ENCODE measurements at regions of chr1 and their contacts with region 1.

Region 1: GRCh38 chr1:87292684-87293493 is 35.8 kb upstream of the LMO4 start:
- DNase-seq: peak in 1 of 2 donors; percentile 66
- ATAC-seq: peak in 4 of 8 donors; percentile 42 to 75 (median 62)
- H3K4me3 ChIP-seq: no peak overlapping the region
- H3K27ac ChIP-seq: no peak overlapping the region
- H3K4me1 ChIP-seq: no peaks in the 10 kb centered on the region
- H3K27me3 ChIP-seq: peaks cover 0 to 2% (median 0%) of the 10 kb centered on the region in 7 donors
- CTCF ChIP-seq: peak; percentile 56 to 88 (median 78)

Region 2: GRCh38 chr1:87131809-87132283 is 161.0 kb before region 1 on chr1:
- intact Hi-C with region 1: loop called in 5 of 10 experiments (anchors 5 to 10 kb)
- DNase-seq: peak; percentile 81 to 84
- ATAC-seq: peak; percentile 87 to 95 (median 91)
- H3K4me3 ChIP-seq: peak overlapping the region; percentile 21 to 63 (median 50)
- H3K27ac ChIP-seq: peak overlapping the region; percentile 5 to 85 (median 68)
- H3K4me1 ChIP-seq: peaks cover 0 to 52% (median 22%) of the 10 kb centered on the region in 9 donors
- H3K27me3 ChIP-seq: peaks cover 0 to 9% (median 0%) of the 10 kb centered on the region in 7 donors
- CTCF ChIP-seq: peak; percentile 85 to 97 (median 93)

Region 3: DNA sequence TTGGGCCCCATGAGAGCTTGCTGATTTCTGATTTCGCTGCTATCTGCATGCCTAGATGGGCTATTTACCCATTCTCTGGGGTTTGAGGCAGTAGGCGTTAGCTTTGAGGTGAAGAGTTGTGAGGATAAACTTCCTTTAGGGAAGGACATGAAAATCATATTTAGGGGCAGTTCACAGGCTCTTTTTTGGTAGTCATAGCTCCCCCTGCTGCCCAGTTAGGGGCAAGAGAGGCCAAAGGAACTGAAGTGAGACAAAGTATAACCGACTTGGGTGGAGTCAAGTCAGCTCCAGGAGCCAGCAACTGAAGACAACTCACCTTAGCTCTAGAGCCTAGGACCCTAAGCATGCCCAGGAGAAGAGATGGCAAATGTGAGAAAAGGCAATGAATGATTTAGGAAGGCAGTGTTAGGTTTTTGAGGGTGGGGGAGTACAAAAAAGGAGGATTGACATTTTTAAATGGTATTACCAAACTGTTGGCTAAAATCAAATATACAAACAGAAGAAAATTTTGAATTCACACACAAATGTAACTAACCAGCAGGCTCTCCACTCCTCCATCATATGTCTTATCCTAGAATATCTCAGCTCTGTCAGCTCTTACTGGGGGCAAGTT is 660.9 kb after region 1 on chr1:
- intact Hi-C with region 1: loop called in 9 of 10 experiments (anchors 2 to 10 kb)
- DNase-seq: peak; percentile 27 to 66
- ATAC-seq: peak; percentile 39 to 83 (median 72)
- H3K4me3 ChIP-seq: no peak overlapping the region
- H3K27ac ChIP-seq: no peak overlapping the region
- H3K4me1 ChIP-seq: peaks cover 0 to 24% (median 0%) of the 10 kb centered on the region in 9 donors
- H3K27me3 ChIP-seq: no peaks in the 10 kb centered on the region
- CTCF ChIP-seq: peak; percentile 50 to 89 (median 82)

Region 4: DNA sequence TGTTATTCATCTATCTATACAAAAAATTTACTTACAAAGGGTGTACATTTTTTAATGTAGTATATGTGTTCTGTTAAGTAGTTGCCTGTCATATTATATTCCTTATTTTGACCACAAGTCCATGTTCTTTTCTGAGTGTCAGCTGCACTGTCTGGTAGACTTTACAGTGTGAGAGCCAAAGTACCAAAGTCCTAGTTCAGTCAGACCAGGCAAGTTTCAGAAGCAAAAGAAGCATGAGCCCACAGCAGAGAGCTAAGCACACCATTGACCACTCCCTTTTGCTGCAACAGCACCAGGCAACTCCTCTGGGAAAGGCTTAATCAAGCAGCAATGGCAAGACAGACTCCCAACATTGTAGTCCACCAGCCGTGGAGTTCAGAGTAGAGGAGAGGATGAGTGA is 759.3 kb after region 1 on chr1:
- intact Hi-C with region 1: loop called in 2 of 10 experiments (anchors 10 kb)
- DNase-seq: no peak
- ATAC-seq: no peak
- H3K4me3 ChIP-seq: no peak overlapping the region
- H3K27ac ChIP-seq: no peak overlapping the region
- H3K4me1 ChIP-seq: peaks cover 0 to 3% (median 0%) of the 10 kb centered on the region in 9 donors
- H3K27me3 ChIP-seq: no peaks in the 10 kb centered on the region
- CTCF ChIP-seq: no peak

Region 5: DNA sequence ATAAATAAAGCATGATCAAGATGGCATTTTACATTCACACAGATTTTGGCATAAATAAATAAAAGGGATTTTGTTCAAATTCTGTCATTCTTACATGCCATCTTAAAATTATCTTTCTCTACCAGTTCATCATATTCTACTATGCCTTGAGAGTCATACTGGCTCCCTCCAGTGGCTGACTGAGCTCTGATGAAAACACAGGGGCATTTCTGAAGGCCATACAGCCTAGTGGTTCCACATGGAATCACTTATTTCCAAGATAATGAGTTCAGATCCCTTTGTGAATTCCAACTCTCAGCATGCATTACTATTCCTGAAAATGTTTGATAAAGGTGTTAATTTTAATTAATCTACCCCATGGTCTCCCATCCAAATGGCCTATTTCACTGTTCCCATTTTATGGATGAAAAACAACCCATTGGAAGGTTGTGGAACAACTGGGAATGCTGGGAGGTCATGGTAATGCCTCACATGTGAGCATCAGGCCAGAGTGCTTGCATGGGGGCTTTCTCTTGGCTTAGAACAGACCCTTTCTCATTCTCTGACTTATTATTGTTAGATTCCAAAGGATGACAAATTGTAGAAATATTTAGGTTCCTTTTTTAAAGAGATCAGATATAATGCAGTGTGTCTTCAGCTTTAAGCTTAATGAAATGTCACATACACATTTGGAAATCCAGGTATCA is 768.7 kb after region 1 on chr1:
- intact Hi-C with region 1: loop called in 7 of 10 experiments (anchors 5 to 10 kb)
- DNase-seq: peak in 1 of 2 donors; percentile 29
- ATAC-seq: peak in 6 of 8 donors; percentile 55 to 91 (median 60)
- H3K4me3 ChIP-seq: no peak overlapping the region
- H3K27ac ChIP-seq: no peak overlapping the region
- H3K4me1 ChIP-seq: no peaks in the 10 kb centered on the region
- H3K27me3 ChIP-seq: no peaks in the 10 kb centered on the region
- CTCF ChIP-seq: peak in 8 of 9 donors; percentile 44 to 71 (median 66)

Region 6: GRCh38 chr1:88180449-88181108 is 887.7 kb after region 1 on chr1:
- intact Hi-C with region 1: loop called in 1 of 10 experiments (anchors 10 kb)
- DNase-seq: peak; percentile 52 to 55
- ATAC-seq: peak; percentile 80 to 94 (median 90)
- H3K4me3 ChIP-seq: no peak overlapping the region
- H3K27ac ChIP-seq: no peak overlapping the region
- H3K4me1 ChIP-seq: no peaks in the 10 kb centered on the region
- H3K27me3 ChIP-seq: peaks cover 0 to 3% (median 0%) of the 10 kb centered on the region in 7 donors
- CTCF ChIP-seq: peak; percentile 72 to 95 (median 92)

Region 7: DNA sequence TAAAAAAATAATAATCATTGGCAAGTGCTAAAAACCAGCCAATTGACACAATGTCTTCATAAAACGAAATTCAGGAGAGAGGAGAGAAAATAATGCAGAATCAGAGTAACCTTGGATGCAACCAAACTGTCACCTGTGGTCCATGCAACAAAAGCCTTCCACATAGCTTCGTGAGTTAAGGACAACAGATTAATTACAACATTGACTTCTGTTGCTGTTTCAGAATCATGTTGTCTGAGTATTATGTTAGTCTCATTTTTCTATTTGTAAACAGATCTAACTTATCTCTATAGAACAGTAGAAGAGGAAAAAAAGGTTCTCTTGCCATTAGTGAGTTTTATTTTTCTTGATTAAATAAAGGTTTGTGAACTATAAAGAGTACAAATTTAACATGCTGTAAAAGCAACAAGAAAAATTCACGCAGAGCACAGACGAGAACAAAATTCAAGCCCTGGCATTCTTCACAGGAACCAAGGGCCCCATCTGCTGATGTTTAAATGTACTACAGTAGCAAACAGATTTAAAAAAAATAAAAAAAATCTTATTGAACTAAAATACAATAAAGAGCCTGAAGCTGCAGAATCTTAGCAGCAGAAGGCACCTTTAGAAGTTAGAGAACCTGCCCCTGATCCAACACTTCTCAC is 1010.1 kb after region 1 on chr1:
- intact Hi-C with region 1: loop called in 3 of 10 experiments (anchors 5 to 10 kb)
- DNase-seq: peak in 1 of 2 donors; percentile 9
- ATAC-seq: no peak
- H3K4me3 ChIP-seq: no peak overlapping the region
- H3K27ac ChIP-seq: no peak overlapping the region
- H3K4me1 ChIP-seq: peaks cover 0 to 7% (median 0%) of the 10 kb centered on the region in 9 donors
- H3K27me3 ChIP-seq: no peaks in the 10 kb centered on the region
- CTCF ChIP-seq: peak in 7 of 9 donors; percentile 41 to 64 (median 53)